Astrocyte of the cerebellum (primary cell): ENCODE measurements at regions of chr9 and their contacts with region 1.

Region 1: DNA sequence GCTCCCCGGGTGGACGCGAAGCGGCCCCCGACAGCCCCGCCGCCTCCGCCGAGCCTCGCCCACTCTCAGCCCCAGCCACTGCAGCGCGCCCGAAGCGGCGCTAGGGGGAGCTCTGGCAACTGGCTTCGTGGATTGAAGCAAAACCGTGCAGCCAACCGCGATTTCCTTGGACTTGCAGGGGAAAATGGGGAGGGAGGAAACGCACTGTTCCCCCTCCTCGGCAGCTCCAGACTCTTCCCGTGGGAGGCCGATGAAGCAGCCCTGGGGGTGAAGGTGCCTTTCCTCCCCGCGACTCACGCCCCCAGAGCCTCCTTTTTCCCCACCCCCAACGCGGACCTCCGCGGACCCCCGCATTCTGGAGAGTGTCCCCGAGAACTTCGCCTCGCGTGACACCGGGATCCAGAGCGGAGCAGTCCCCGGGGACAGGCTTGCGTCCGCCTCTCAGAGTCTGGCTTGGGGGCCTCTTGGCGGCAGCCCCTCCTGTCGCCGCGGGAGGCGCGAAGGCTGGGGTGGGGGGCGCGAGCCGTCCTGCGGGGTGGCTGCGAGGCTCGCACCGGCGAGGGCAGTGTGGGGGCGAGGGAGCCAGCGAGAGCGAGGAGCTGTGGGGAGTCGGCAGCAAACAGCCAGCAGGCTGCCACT is 3.9 kb downstream of the IER5L start:
- DNase-seq: peak; percentile 86
- H3K4me3 ChIP-seq: peak overlapping the region; percentile 94
- CTCF ChIP-seq: peak; percentile 98

Region 2: GRCh38 chr9:129237195-129237611 is 63.0 kb after region 1 on chr9:
- in situ Hi-C with region 1: loop called (anchors 5 kb)
- DNase-seq: no peak
- H3K4me3 ChIP-seq: no peak overlapping the region
- CTCF ChIP-seq: no peak